Activated CD4-positive, alpha-beta T cell treated with anti-CD3 and anti-CD28 coated beads, Interleukin-2, amount 10 ng/mL, durations not matched to agents 24 days and 14 days (primary cell): ENCODE measurements at regions of chr11 and their contacts with region 1.

Region 1: DNA sequence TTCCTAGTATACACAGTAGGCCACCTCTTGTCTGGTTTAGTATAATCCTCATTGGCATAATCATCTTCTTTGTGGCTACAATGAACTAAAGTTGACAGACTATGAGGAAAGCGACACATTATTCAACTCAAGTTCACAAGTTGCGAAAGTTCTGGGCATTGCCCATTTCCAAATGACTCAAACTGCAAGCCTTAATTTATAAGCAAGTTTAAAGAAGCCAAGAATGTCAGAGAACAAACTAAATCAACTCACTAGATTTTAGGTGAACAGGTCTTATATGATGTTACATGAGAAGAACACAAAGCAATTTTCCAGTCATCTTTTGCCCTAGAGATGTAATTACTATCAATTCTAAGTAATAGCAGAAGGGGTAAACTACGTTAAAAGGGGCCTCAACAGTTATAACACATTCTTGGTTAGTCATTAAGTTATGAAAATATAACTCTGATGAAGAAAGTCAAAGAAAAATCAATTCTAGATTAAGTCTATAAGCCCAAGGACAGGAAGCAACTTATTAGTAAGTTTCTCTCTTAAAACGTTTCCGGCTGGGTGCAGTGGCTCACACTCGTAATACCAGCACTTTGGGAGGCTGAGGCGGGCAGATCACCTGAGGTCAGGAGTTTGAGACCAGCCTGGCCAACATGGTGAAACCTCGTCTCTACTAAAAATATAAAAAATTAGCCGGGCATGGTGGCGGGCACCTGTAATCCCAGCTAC is 21.5 kb downstream of the PICALM start:
- DNase-seq: peak; percentile 64
- H3K4me3 Mint-ChIP-seq: peak overlapping the region; percentile 57
- H3K27ac Mint-ChIP-seq: peak overlapping the region; percentile 96
- H3K4me1 Mint-ChIP-seq: peaks cover 72% of the 10 kb centered on the region
- H3K27me3 Mint-ChIP-seq: no peaks in the 10 kb centered on the region

Region 2: DNA sequence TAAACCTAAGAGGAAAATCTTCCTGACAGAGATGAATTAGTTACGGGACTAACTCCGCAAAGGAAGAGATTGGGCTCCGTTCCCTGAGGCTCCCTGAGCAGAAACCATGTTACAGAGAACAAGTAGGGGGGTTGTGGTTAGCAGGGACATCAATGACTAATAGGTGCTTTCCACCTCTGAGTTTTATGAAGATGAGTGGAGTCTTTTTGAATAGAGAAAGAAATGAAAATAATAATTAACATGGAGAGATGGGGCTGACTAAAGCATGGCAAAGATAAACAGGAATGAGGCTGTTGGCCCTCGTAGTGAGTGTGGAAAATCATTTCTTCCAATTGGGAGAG is 68.9 kb after region 1 on chr11:
- intact Hi-C with region 1: loop called (anchors 2 kb)
- DNase-seq: peak; percentile 70
- H3K4me3 Mint-ChIP-seq: peak overlapping the region; percentile 24
- H3K27ac Mint-ChIP-seq: peak overlapping the region; percentile 69
- H3K4me1 Mint-ChIP-seq: peaks cover 30% of the 10 kb centered on the region
- H3K27me3 Mint-ChIP-seq: peaks cover 2% of the 10 kb centered on the region

Region 3: GRCh38 chr11:86138958-86139357 is 91.5 kb after region 1 on chr11:
- intact Hi-C with region 1: loop called (anchors 2 kb)
- DNase-seq: peak; percentile 79
- H3K4me3 Mint-ChIP-seq: peak overlapping the region; percentile 72
- H3K27ac Mint-ChIP-seq: peak overlapping the region; percentile 85
- H3K4me1 Mint-ChIP-seq: peaks cover 58% of the 10 kb centered on the region
- H3K27me3 Mint-ChIP-seq: no peaks in the 10 kb centered on the region

Region 4: GRCh38 chr11:86202013-86202336 is 154.5 kb after region 1 on chr11:
- intact Hi-C with region 1: loop called (anchors 2 kb)
- DNase-seq: peak; percentile 70
- H3K4me3 Mint-ChIP-seq: no peak overlapping the region
- H3K27ac Mint-ChIP-seq: no peak overlapping the region
- H3K4me1 Mint-ChIP-seq: peaks cover 14% of the 10 kb centered on the region
- H3K27me3 Mint-ChIP-seq: no peaks in the 10 kb centered on the region

Region 5: DNA sequence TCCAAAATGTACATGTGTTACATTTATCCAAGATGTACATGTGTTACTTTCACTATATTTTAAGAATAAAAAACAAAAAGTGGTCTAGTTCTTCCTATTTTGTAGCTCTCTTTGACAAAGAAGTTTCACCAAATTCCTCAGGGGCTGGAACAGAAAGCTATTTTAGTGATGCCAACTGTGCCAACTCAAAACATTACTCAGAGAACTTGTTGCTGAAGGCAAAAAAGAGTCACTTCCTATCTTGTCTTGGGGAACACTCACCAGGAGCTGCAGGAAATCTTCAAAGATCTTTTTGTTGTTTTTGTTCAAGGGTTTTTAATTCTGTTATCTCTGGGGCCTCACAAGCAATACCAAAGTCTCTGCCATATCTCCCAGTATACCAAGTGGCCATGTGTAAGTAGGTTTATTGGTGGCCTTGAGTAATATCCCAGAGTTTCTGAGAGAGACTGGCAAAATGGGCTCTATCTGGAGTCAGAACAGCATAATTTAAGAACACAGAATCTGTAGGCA is 183.5 kb after region 1 on chr11:
- intact Hi-C with region 1: loop called (anchors 1 kb)
- DNase-seq: peak; percentile 53
- H3K4me3 Mint-ChIP-seq: no peak overlapping the region
- H3K27ac Mint-ChIP-seq: peak overlapping the region; percentile 73
- H3K4me1 Mint-ChIP-seq: peaks cover 46% of the 10 kb centered on the region
- H3K27me3 Mint-ChIP-seq: peaks cover 2% of the 10 kb centered on the region